ENCODE measurements at regions of chr16 and their contacts with region 1.

Region 1: GRCh38 chr16:67150833-67151396 is at the start of gene B3GNT9:
- DNase-seq: peak; percentile 37
- H3K4me3 ChIP-seq: peak within 1 kb of the TSS; percentile 63
- H3K27ac ChIP-seq: peak within 1 kb of the TSS; percentile 82
- H3K27me3 ChIP-seq: peaks cover 8% of the 10 kb centered on the region
- CTCF ChIP-seq: no peak
- polyA plus RNA-seq, gene B3GNT9: 18.6 and 25.6 TPM in 2 replicates

Region 2: GRCh38 chr16:66786551-66786950 is 364.4 kb before region 1 on chr16:
- CTCF ChIA-PET with region 1: no interaction called
- POLR2A ChIA-PET with region 1: no interaction called
- DNase-seq: no peak
- H3K4me3 ChIP-seq: no peak overlapping the region
- H3K27ac ChIP-seq: no peak overlapping the region
- H3K27me3 ChIP-seq: peaks cover 6% of the 10 kb centered on the region
- CTCF ChIP-seq: no peak

Region 3: DNA sequence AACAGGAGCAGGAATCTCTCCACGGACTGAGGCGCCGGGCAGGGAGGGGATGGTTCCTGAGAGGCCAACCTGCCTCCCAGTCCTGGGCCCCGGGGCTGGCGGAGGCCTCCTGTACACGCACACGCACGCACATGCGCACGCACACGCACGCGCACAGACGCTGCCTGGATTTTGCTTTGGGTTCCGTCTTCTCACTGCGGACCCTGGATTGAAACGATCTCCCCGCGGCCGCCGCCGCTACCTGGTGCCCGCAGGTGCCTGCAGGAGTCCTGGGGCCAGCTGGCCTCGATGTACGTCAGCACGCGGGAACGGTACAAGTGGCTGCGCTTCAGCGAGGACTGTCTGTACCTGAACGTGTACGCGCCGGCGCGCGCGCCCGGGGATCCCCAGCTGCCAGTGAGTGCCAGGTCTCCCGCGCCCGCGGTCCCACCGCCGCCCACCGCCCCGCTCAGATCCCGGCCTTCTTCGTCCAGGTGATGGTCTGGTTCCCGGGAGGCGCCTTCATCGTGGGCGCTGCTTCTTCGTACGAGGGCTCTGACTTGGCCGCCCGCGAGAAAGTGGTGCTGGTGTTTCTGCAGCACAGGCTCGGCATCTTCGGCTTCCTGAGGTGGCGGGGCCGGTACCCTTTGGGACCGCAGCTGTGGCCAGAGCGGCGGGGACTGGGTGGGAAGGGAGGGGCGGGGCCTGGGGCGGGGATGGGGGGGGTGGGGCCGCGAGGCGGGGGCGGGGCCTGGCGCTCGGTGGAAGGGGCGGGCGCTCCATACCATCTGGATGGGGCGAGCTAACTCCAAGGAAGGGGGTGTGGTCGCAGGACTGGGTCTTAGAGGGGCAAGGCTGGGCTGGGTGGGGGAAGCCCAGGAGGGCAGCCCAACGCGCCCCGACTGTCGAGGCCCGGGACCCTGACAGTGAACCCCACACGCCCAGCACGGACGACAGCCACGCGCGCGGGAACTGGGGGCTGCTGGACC is 150.2 kb before region 1 on chr16:
- CTCF ChIA-PET with region 1: no interaction called
- POLR2A ChIA-PET with region 1: interaction called, 11 read pairs
- DNase-seq: no peak
- H3K4me3 ChIP-seq: peak overlapping the region; percentile 63
- H3K27ac ChIP-seq: no peak overlapping the region
- H3K27me3 ChIP-seq: peaks cover 20% of the 10 kb centered on the region
- CTCF ChIP-seq: no peak

Region 4: DNA sequence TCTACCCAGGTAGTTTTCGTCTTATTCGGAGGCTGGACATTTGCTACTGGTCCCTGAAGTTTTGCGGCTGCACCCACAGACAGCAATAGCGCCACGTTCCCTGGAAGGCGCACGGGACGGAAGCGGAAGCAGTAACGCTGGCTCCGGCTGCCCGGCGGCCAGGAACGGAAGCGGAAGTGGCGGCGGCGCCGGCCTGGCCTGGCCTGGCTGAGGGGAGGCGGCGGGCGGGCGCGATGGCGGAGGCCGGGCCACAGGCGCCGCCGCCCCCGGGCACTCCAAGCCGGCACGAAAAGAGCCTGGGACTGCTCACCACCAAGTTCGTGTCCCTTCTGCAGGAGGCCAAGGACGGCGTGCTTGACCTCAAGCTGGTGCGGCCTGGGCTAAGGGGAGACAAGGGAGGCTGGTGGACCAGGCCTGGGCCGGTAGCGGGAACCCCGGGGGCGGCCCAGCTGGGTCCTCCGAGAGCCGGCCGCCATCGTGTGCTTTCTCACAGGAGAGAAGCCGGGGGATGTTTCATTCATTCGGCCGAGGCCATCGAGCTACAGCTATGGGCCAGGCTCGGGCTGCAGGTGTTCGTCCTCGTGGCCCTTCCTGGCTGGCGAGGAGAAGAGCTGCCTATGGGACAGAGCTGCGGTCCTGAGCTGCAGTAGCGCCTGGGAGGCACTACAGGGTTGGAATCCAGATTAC is 41.2 kb after region 1 on chr16 and contains the start of gene E2F4:
- CTCF ChIA-PET with region 1: no interaction called
- POLR2A ChIA-PET with region 1: no interaction called
- DNase-seq: peak; percentile 76
- H3K4me3 ChIP-seq: peak within 1 kb of the TSS; percentile 98
- H3K27ac ChIP-seq: peak within 1 kb of the TSS; percentile 39
- H3K27me3 ChIP-seq: no peaks in the 10 kb centered on the region
- CTCF ChIP-seq: no peak
- polyA plus RNA-seq, gene E2F4: 50.0 and 57.9 TPM in 2 replicates

Measured in AG04450 (cell line).